PC-9 (cell line): ENCODE measurements at regions of chr13 and their contacts with region 1.

Region 1: DNA sequence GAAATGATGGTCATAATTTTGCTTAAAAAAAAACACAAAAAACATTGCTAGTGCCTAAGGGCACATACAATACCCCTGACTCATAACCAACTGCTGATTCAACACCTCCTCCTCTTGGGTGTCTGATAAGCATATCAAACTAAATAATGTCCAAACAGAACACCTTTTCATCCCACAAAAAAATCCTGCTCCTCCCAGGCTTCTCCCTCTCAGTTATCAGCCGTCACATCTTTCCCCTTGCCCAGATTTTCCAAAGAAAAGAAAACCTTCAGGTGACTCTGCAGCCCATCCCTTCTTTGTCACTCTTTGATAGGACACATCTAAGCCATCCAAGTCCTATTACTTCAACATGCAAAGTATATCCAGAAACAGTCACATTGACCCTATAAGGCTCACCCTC is 46.9 kb downstream of the ABCC4 start:
- DNase-seq: peak; percentile 51 to 78
- H3K4me3 ChIP-seq: no peak overlapping the region
- H3K27ac ChIP-seq: peak overlapping the region; percentile 70
- H3K4me1 ChIP-seq: peaks cover 46% of the 10 kb centered on the region
- H3K27me3 ChIP-seq: no peaks in the 10 kb centered on the region
- CTCF ChIP-seq: no peak

Region 2: DNA sequence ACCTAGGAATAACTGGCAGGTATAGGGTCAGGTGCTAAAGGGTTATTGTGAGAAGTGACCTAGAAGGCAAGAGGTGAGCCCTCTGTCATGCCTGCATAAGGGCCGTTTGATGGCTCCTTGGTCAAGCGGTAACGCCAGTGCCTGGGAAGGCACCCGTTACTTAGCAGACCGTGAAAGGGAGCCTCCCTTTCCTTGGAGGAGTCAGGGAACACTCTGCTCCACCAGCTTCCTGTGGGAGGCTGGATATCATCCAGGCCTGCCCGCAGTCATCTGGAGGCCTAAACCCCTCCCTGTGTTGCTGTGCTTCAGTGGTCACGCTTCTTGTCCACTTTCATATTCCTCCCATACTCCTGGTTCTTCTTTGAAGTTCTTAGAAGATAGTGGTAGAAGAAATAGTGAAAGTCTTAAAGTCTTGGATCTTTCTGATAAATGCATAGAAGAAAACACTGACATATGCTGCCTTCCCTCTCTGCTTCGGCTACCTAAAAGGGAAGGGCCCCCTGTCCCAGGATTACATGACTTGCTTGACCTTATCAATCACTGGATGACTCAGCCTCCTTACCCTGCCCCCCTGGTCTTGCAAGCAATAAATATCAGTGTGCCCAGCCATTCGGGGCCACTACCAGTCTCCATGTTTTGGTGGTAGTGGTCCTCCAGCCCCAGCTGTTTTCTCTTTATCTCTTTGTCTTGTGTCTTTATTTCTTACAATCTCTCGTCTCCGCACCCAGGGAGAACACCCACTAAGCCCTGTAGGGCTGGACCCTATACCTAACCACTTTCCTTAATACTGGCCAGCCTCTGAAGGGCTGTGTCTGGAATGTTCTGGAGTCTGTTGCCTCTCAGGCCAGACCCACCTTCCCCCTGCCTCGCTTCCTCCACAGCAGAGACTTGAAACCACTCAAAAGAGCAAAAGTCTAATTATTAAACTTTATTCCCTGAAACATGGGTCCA is 63.0 kb after region 1 on chr13:
- CTCF ChIA-PET with region 1: no interaction called
- POLR2A ChIA-PET with region 1: no interaction called
- intact Hi-C with region 1: loop called (anchors 1 kb)
- DNase-seq: no peak
- H3K4me3 ChIP-seq: no peak overlapping the region
- H3K27ac ChIP-seq: no peak overlapping the region
- H3K4me1 ChIP-seq: peaks cover 16% of the 10 kb centered on the region
- H3K27me3 ChIP-seq: no peaks in the 10 kb centered on the region
- CTCF ChIP-seq: no peak